ENCODE measurements at regions of chr22 and their contacts with region 1.

Region 1: GRCh38 chr22:49970528-49971231 is 10.1 kb downstream of the PIM3 start:
- DNase-seq: peak; percentile 98
- H3K4me3 Mint-ChIP-seq: peak overlapping the region; percentile 69
- H3K27ac Mint-ChIP-seq: peak overlapping the region; percentile 72
- H3K4me1 Mint-ChIP-seq: peaks cover 15% of the 10 kb centered on the region
- H3K27me3 Mint-ChIP-seq: no peaks in the 10 kb centered on the region
- CTCF ChIP-seq: no peak

Region 2: GRCh38 chr22:49951000-49951677 is 19.5 kb before region 1 on chr22:
- CTCF ChIA-PET with region 1: no interaction called
- POLR2A ChIA-PET with region 1: interaction called, 46 read pairs
- intact Hi-C with region 1: no loop called
- DNase-seq: peak; percentile 90
- H3K4me3 Mint-ChIP-seq: peak overlapping the region; percentile 29
- H3K27ac Mint-ChIP-seq: peak overlapping the region; percentile 88
- H3K4me1 Mint-ChIP-seq: peaks cover 24% of the 10 kb centered on the region
- H3K27me3 Mint-ChIP-seq: no peaks in the 10 kb centered on the region
- CTCF ChIP-seq: no peak

Region 3: DNA sequence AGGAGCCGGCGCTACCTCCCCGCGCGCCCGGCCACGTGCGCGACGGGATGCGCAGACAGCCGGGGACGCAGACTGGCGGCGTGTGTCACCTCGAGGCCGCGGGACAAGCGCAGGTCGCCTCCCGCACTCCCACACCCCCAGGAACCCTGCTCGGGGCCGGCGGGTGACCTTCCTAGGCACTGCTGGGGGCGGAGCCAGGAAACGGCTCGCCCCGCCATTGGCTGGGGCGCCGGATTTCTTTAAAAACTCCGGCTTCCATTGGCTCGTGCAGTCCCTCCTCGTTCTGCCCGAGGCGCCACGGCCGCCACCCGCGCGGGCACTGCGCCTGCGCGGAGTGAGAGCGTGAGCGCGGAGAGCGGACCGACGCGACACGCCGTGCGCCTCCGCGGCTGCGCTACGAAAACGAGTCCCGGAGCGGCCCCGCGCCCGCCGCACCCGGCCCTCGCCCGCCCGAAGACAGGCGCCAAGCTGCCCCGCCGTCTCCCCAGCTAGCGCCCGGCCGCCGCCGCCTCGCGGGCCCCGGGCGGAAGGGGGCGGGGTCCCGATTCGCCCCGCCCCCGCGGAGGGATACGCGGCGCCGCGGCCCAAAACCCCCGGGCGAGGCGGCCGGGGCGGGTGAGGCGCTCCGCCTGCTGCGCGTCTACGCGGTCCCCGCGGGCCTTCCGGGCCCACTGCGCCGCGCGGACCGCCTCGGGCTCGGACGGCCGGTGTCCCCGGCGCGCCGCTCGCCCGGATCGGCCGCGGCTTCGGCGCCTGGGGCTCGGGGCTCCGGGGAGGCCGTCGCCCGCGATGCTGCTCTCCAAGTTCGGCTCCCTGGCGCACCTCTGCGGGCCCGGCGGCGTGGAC is 10.3 kb before region 1 on chr22 and contains the start of gene PIM3:
- CTCF ChIA-PET with region 1: no interaction called
- POLR2A ChIA-PET with region 1: interaction called, 29 read pairs
- intact Hi-C with region 1: no loop called
- DNase-seq: peak; percentile 96
- H3K4me3 Mint-ChIP-seq: peak within 1 kb of the TSS; percentile 90
- H3K27ac Mint-ChIP-seq: peak within 1 kb of the TSS; percentile 77
- H3K4me1 Mint-ChIP-seq: peaks cover 19% of the 10 kb centered on the region
- H3K27me3 Mint-ChIP-seq: no peaks in the 10 kb centered on the region
- CTCF ChIP-seq: no peak
- total RNA-seq, gene PIM3: 56.3 and 73.5 TPM in 2 replicates